K562 (cell line): ENCODE measurements at regions of chr7 and their contacts with region 1.

Region 1: GRCh38 chr7:95871078-95871782 is 98.9 kb downstream of the DYNC1I1 start:
- DNase-seq: peak; percentile 46 to 60 (median 50)
- ATAC-seq: peak; percentile 89
- H3K4me3 ChIP-seq: no peak overlapping the region
- H3K27ac ChIP-seq: no peak overlapping the region
- H3K4me1 ChIP-seq: no peaks in the 10 kb centered on the region
- H3K27me3 ChIP-seq: no peaks in the 10 kb centered on the region
- CTCF ChIP-seq: peak; percentile 62 to 84 (median 63)
- EP300 ChIP-seq: no peak
- POLR2A ChIP-seq: no peak
- RAD21 ChIP-seq: peak; percentile 73 to 74

Region 2: DNA sequence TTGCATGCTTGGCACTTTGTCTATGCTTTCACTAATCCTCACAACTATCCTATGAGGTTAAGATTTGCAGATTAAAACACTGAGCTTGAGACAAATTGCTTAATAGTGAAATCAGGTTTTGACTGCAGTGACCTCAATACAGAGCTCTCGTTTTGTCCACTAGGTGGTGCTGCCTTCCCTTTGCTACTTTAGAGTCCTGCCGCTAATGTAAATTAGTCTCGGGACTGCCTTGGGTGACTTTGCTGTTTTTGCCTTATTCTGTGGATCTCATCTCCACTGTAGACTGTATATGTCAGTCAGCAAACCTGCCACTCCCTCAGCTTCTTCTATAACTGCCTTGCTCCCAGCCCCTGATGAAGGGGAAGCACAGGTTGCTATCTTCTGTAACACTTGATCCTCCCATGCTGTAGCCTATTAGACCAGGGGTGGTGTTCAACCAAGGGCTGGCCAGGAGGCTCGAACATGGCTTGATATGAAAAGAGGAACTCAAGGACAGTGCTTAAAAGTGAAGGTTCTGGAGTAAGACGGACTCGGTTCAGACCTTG is 359.4 kb before region 1 on chr7:
- CTCF ChIA-PET with region 1: no interaction called
- POLR2A ChIA-PET with region 1: no interaction called
- in situ Hi-C with region 1: loop called (anchors 25 kb)
- intact Hi-C with region 1: loop called (anchors 2 kb)
- DNase-seq: peak; percentile 59 to 87 (median 68)
- ATAC-seq: peak; percentile 99
- H3K4me3 ChIP-seq: no peak overlapping the region
- H3K27ac ChIP-seq: no peak overlapping the region
- H3K4me1 ChIP-seq: peaks cover 0 to 5% of the 10 kb centered on the region in 2 experiments; a peak in 2 of 5 replicates
- H3K27me3 ChIP-seq: no peaks in the 10 kb centered on the region
- CTCF ChIP-seq: peak; percentile 87 to 92 (median 87)
- EP300 ChIP-seq: no peak; the same call in 1 of the 2 replicates
- POLR2A ChIP-seq: no peak
- RAD21 ChIP-seq: peak; percentile 80 to 86

Region 3: GRCh38 chr7:95527033-95527775 is 344.0 kb before region 1 on chr7:
- CTCF ChIA-PET with region 1: interaction called, 3 read pairs
- POLR2A ChIA-PET with region 1: no interaction called
- in situ Hi-C with region 1: loop called (anchors 25 kb)
- intact Hi-C with region 1: loop called (anchors 1 kb)
- DNase-seq: peak; percentile 72 to 78 (median 74)
- ATAC-seq: peak; percentile 98
- H3K4me3 ChIP-seq: no peak overlapping the region
- H3K27ac ChIP-seq: no peak overlapping the region
- H3K4me1 ChIP-seq: peaks cover 0 to 4% of the 10 kb centered on the region in 2 experiments; a peak in 1 of 5 replicates
- H3K27me3 ChIP-seq: peaks cover 0 to 5% of the 10 kb centered on the region in 2 experiments; a peak in 1 of 5 replicates
- CTCF ChIP-seq: peak; percentile 79 to 93 (median 91)
- EP300 ChIP-seq: no peak
- POLR2A ChIP-seq: no peak
- RAD21 ChIP-seq: peak; percentile 96 to 97

Region 4: DNA sequence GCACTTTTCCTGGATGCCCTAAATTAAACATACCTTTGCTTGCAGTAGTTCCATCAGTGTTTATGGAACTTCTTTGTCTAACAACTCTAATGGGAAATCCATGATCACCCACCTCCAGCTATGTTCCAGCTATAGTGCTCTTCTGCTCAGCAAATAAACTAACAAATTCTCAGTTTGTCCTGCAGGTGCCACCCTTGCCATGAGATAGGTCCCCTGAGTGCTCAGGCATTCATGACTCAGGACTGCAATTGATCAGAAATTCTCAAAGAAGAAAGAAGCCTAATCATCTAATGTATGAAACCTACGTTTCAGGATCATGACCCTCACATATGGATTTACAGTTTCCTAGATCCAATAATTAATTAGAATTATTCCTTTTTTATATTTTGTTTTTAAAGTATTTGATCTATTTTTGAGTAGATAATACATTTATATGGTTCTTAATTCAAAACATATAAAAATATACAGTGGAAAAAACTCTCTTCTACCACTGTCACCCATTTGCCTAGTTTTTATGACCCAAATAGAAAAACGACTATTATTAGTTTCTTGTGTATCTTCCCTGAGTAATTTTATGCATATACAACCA is 147.5 kb before region 1 on chr7:
- CTCF ChIA-PET with region 1: interaction called, 19 read pairs
- POLR2A ChIA-PET with region 1: no interaction called
- in situ Hi-C with region 1: loop called (anchors 5 kb)
- intact Hi-C with region 1: loop called (anchors 1 kb)
- DNase-seq: peak; percentile 18 to 49 (median 34)
- ATAC-seq: peak; percentile 82
- H3K4me3 ChIP-seq: no peak overlapping the region
- H3K27ac ChIP-seq: no peak overlapping the region
- H3K4me1 ChIP-seq: no peaks in the 10 kb centered on the region
- H3K27me3 ChIP-seq: peaks cover 4 to 6% of the 10 kb centered on the region in 2 experiments; a peak in 3 of 5 replicates
- CTCF ChIP-seq: peak; percentile 46 to 68 (median 49); a peak in 4 of 6 replicates
- EP300 ChIP-seq: no peak
- POLR2A ChIP-seq: no peak
- RAD21 ChIP-seq: peak; percentile 63 to 71

Region 5: DNA sequence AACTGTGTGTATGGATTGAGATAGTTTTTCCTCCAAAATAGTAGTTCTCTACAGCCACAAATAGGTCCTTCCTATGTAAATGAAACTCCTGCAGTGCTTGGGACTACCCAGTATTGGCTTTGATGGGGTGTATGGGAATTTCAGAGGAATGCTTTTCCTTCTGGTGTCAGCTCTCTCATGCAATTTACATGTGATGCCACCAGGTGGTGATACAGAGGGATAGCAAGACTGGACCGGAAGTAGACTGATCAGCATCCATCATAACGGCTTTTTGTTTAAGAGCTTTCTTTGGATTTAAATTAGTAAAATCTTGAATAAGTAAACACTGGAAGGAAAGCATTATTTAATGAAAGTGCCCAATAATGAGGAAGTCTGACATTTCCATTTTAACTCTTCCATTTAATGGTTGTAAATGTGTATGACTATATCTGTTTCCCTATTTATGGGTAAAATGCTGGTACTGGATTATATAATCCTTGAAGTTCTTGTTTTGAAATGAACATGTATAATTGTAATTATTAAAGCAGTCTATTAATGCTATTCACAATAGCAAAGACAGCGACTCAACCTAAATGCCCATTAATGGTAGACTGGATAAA is 76.2 kb before region 1 on chr7:
- CTCF ChIA-PET with region 1: interaction called, 3 read pairs
- POLR2A ChIA-PET with region 1: no interaction called
- in situ Hi-C with region 1: no loop called
- intact Hi-C with region 1: loop called (anchors 5 kb)
- DNase-seq: peak; percentile 31 to 70 (median 51)
- ATAC-seq: peak; percentile 79
- H3K4me3 ChIP-seq: no peak overlapping the region
- H3K27ac ChIP-seq: no peak overlapping the region
- H3K4me1 ChIP-seq: no peaks in the 10 kb centered on the region
- H3K27me3 ChIP-seq: no peaks in the 10 kb centered on the region
- CTCF ChIP-seq: peak; percentile 50 to 63 (median 55)
- EP300 ChIP-seq: no peak
- POLR2A ChIP-seq: no peak
- RAD21 ChIP-seq: peak; percentile 34 to 44; a peak in 2 of 4 replicates

Region 6: DNA sequence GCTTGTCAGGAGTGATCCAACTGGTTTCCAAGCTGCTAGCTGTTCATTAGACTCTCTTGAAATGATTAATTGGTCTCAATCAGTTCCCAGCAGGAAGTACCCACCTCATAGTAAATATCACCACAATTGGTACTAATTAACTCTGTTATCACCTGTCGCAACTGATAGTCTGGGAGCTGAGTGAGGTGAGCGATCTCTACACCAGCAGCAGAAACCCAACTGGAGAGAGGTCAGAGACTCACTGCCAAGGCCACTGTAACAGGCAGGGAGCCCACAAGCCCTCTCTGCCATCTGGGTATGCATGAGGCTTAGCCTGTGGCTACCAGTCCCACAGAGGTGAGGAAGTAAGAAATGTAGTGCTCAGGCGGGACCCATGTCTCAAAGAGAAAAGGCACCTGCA is 146.6 kb after region 1 on chr7:
- CTCF ChIA-PET with region 1: no interaction called
- POLR2A ChIA-PET with region 1: no interaction called
- in situ Hi-C with region 1: no loop called
- intact Hi-C with region 1: no loop called
- DNase-seq: no peak
- ATAC-seq: no peak
- H3K4me3 ChIP-seq: no peak overlapping the region
- H3K27ac ChIP-seq: no peak overlapping the region
- H3K4me1 ChIP-seq: no peaks in the 10 kb centered on the region
- H3K27me3 ChIP-seq: no peaks in the 10 kb centered on the region
- CTCF ChIP-seq: no peak
- EP300 ChIP-seq: no peak
- POLR2A ChIP-seq: no peak
- RAD21 ChIP-seq: no peak